ENCODE measurements at regions of chr19 and their contacts with region 1.

Region 1: DNA sequence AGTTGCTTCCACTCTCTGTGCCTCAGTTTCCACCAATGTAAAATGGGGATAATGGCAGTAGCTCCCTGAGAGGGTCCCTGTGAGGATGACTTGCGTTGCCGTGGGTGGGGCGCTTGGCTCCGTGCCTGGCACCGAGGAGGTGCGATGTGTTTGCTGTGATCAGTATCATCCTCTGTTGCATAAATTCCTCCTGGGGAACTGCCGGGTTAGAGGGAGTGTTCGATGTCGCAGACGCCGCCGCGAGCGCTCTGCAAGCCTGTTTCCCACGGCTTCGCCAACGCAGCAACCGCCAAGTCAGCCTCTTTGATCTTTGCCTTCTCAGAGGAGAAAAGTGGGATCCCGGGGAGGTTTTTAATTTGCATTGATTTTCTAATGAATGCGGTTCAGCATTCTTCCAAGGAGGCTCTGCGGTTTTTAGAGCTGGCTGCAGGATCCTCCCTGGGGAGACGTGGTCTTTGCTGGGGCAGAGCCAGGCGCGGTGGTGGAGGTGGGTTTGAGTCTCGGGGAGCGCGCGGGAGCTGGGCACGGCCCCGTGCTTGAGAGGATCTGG is 7.6 kb downstream of the GPR32 start:
- DNase-seq: peak in 1 of 2 donors; percentile 28
- ATAC-seq: no peak
- H3K4me3 ChIP-seq: no peak overlapping the region
- H3K4me3 Mint-ChIP-seq: no peak overlapping the region
- H3K27ac ChIP-seq: no peak overlapping the region
- H3K27ac Mint-ChIP-seq: no peak overlapping the region
- H3K4me1 ChIP-seq: no peaks in the 10 kb centered on the region
- H3K4me1 Mint-ChIP-seq: no peaks in the 10 kb centered on the region
- H3K27me3 ChIP-seq: peaks cover 16% of the 10 kb centered on the region
- H3K27me3 Mint-ChIP-seq: peaks cover 46 to 51% of the 10 kb centered on the region in 2 donors
- CTCF ChIP-seq: no peak

Region 2: GRCh38 chr19:50537762-50538230 is 240.0 kb before region 1 on chr19:
- intact Hi-C with region 1: loop called (anchors 1 kb)
- DNase-seq: peak; percentile 54 to 75
- ATAC-seq: peak; percentile 43 to 67 (median 44)
- H3K4me3 ChIP-seq: no peak overlapping the region
- H3K4me3 Mint-ChIP-seq: no peak overlapping the region
- H3K27ac ChIP-seq: no peak overlapping the region
- H3K27ac Mint-ChIP-seq: no peak overlapping the region
- H3K4me1 ChIP-seq: no peaks in the 10 kb centered on the region
- H3K4me1 Mint-ChIP-seq: no peaks in the 10 kb centered on the region
- H3K27me3 ChIP-seq: no peaks in the 10 kb centered on the region
- H3K27me3 Mint-ChIP-seq: peaks cover 4 to 12% of the 10 kb centered on the region in 2 donors
- CTCF ChIP-seq: peak; percentile 76

Region 3: DNA sequence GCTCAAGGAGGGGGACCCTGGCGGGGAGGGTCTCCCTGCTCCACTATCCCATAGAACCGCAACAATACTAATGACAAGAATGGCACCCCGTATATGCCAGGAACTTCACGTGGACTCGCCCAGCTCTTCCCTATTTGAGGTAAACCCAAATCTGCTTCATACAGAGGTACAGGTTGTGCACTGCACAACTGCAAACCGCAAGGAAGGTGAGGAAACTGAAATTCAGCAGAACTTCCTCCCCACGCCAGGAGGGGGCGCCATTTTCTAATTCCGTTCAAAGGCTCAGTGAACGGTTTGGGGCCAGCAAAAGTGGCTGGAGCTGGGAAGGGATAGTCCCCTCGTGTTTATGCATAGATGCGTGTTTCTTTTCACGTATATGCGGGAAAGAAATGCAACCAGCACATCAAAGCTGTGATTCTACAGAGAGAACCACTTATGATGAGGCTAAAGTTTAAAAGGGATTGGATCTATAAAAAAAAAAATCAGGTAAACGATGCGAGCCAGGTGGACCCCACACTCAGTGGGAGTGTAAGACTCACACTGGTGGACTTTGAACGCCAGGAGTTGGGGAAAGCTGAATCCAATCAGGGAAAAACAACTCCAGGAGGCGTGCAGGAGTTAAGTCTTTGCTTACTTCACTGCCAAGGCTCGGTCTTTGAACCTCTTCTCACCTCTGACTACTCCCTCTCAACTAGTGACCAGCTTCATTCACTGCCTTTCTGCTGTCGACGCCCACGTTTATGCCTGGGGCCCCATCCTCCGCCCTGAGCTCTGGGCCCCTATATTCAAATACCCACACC is 108.3 kb before region 1 on chr19:
- intact Hi-C with region 1: loop called (anchors 1 kb)
- DNase-seq: peak in 1 of 2 donors; percentile 53
- ATAC-seq: peak in 2 of 3 donors; percentile 31 to 36
- H3K4me3 ChIP-seq: no peak overlapping the region
- H3K4me3 Mint-ChIP-seq: no peak overlapping the region
- H3K27ac ChIP-seq: no peak overlapping the region
- H3K27ac Mint-ChIP-seq: no peak overlapping the region
- H3K4me1 ChIP-seq: peaks cover 3% of the 10 kb centered on the region
- H3K4me1 Mint-ChIP-seq: no peaks in the 10 kb centered on the region
- H3K27me3 ChIP-seq: peaks cover 10% of the 10 kb centered on the region
- H3K27me3 Mint-ChIP-seq: peaks cover 25 to 44% of the 10 kb centered on the region in 2 donors
- CTCF ChIP-seq: peak; percentile 70

Region 4: GRCh38 chr19:50705422-50706019 is 72.3 kb before region 1 on chr19:
- intact Hi-C with region 1: loop called (anchors 1 kb)
- DNase-seq: peak in 1 of 2 donors; percentile 61
- ATAC-seq: peak; percentile 63 to 86 (median 85)
- H3K4me3 ChIP-seq: no peak overlapping the region
- H3K4me3 Mint-ChIP-seq: no peak overlapping the region
- H3K27ac ChIP-seq: no peak overlapping the region
- H3K27ac Mint-ChIP-seq: no peak overlapping the region
- H3K4me1 ChIP-seq: no peaks in the 10 kb centered on the region
- H3K4me1 Mint-ChIP-seq: no peaks in the 10 kb centered on the region
- H3K27me3 ChIP-seq: no peaks in the 10 kb centered on the region
- H3K27me3 Mint-ChIP-seq: peaks cover 7 to 10% of the 10 kb centered on the region in 2 donors
- CTCF ChIP-seq: peak; percentile 49